Calu3 (cell line): ENCODE measurements at regions of chr19 and their contacts with region 1.

Region 1: DNA sequence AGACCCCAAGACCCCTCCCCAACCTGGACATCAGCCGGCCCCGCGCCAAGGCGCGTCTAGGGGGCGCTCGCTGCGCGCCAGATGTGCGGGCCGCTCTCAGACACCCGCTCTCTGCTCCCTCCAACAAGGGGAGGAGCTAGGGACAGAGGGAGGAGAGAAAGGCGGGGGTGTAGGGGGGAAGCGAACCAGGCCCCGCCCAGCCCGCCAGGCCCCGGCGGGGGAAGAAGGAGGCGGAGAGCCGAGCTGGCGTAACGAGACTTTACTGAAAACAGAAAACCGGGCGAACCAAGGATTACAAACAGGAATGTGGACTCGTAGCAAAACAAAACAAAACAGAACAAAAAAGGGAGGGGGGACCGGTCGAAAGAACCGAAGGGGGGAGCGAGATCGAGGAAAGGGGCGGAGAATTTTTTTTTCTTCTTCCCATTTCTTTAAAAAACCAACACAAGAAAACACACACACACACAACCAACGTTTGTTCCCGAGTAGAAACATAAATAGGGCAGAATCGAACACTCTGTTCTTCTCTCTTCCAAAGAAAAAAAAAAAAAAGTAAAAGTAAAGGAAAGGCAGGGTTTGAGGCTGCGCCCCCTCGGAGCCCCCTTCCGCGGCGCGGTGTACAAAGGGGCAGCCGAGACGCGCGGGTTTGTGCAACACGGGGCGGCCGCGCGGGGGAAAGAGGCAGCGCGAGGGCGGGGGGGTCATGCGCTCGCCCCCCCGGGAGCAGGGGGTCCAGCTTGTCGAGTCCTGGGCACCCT is 1.7 kb downstream of the JUND start:
- DNase-seq: peak; percentile 90
- H3K4me3 Mint-ChIP-seq: peak overlapping the region; percentile 74
- H3K27ac Mint-ChIP-seq: peak overlapping the region; percentile 73
- H3K4me1 Mint-ChIP-seq: peaks cover 17% of the 10 kb centered on the region
- H3K27me3 Mint-ChIP-seq: no peaks in the 10 kb centered on the region
- CTCF ChIP-seq: peak; percentile 86

Region 2: GRCh38 chr19:18218159-18218558 is 61.5 kb before region 1 on chr19:
- CTCF ChIA-PET with region 1: no interaction called
- intact Hi-C with region 1: no loop called
- DNase-seq: no peak
- H3K4me3 Mint-ChIP-seq: no peak overlapping the region
- H3K27ac Mint-ChIP-seq: no peak overlapping the region
- H3K4me1 Mint-ChIP-seq: no peaks in the 10 kb centered on the region
- H3K27me3 Mint-ChIP-seq: peaks cover 24% of the 10 kb centered on the region
- CTCF ChIP-seq: no peak

Region 3: GRCh38 chr19:18259893-18260292 is 19.8 kb before region 1 on chr19:
- CTCF ChIA-PET with region 1: interaction called, 15 read pairs
- intact Hi-C with region 1: no loop called
- DNase-seq: no peak
- H3K4me3 Mint-ChIP-seq: no peak overlapping the region
- H3K27ac Mint-ChIP-seq: no peak overlapping the region
- H3K4me1 Mint-ChIP-seq: peaks cover 7% of the 10 kb centered on the region
- H3K27me3 Mint-ChIP-seq: no peaks in the 10 kb centered on the region
- CTCF ChIP-seq: no peak

Region 4: DNA sequence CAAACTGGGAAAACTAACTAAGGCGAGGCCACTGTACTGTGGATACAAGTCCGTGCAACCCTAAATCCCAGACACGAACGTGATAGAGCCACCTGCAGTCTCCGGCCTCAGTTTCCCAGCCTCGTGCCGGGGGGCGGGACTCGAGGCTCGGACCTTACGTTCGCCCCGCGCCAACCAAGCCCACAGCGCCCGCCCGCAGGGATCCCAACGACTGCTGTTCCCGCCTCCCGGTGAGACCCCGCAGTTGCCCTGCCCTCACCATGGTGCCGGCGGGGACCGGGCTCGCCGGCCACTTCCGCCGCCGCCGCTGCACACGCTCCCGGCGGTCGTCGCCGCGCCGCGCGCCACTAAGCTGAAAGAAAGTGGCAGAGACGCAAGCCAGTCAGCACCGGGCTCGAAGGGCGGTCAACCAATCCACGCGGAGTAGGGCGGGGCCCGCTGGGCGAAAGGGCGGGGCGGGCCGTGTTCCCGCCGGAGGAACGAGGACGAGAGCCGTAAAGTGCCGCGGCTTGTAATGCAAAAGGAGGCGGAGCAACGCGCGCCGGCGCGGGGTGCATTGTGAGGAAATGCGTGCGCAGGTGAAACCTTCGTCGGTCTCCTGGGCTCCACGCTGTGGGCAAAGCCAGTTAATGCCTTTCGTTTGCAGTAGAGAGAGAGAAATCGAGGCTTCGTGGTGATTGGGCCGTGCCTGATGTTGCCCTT is 43.2 kb after region 1 on chr19 and contains the start of gene LSM4:
- CTCF ChIA-PET with region 1: interaction called, 48 read pairs
- intact Hi-C with region 1: loop called (anchors 1 kb)
- DNase-seq: peak; percentile 95
- H3K4me3 Mint-ChIP-seq: peak within 1 kb of the TSS; percentile 72
- H3K27ac Mint-ChIP-seq: peak within 1 kb of the TSS; percentile 91
- H3K4me1 Mint-ChIP-seq: peaks cover 31% of the 10 kb centered on the region
- H3K27me3 Mint-ChIP-seq: no peaks in the 10 kb centered on the region
- CTCF ChIP-seq: no peak
- total RNA-seq, gene LSM4: 111 and 115 TPM in 2 replicates

Region 5: GRCh38 chr19:18328340-18329034 is 48.8 kb after region 1 on chr19:
- CTCF ChIA-PET with region 1: interaction called, 31 read pairs
- intact Hi-C with region 1: loop called (anchors 1 kb)
- DNase-seq: peak; percentile 79
- H3K4me3 Mint-ChIP-seq: peak overlapping the region; percentile 39
- H3K27ac Mint-ChIP-seq: peak overlapping the region; percentile 76
- H3K4me1 Mint-ChIP-seq: peaks cover 6% of the 10 kb centered on the region
- H3K27me3 Mint-ChIP-seq: no peaks in the 10 kb centered on the region
- CTCF ChIP-seq: peak; percentile 45

Region 6: DNA sequence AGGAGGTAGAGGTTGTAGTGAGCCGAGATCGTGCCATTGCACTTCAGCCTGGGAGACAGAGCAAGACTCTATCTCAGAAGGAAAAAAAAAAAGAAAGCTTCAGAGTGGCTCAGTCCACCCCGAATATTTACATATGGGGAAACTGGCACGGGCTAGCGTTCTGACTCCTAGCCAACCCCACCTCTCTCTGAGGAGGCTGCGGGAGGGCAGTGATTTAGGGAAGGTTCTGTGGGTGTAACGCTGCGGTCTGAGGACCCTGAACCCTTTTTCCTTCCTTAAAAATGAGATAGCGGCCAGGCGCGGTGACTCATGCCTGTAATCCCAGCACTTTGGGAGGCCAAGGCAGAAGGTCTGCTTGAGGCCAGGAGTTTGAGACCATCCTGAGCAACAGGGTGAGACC is 112.7 kb after region 1 on chr19:
- CTCF ChIA-PET with region 1: no interaction called
- intact Hi-C with region 1: no loop called
- DNase-seq: no peak
- H3K4me3 Mint-ChIP-seq: no peak overlapping the region
- H3K27ac Mint-ChIP-seq: no peak overlapping the region
- H3K4me1 Mint-ChIP-seq: peaks cover 22% of the 10 kb centered on the region
- H3K27me3 Mint-ChIP-seq: no peaks in the 10 kb centered on the region
- CTCF ChIP-seq: no peak

Region 7: DNA sequence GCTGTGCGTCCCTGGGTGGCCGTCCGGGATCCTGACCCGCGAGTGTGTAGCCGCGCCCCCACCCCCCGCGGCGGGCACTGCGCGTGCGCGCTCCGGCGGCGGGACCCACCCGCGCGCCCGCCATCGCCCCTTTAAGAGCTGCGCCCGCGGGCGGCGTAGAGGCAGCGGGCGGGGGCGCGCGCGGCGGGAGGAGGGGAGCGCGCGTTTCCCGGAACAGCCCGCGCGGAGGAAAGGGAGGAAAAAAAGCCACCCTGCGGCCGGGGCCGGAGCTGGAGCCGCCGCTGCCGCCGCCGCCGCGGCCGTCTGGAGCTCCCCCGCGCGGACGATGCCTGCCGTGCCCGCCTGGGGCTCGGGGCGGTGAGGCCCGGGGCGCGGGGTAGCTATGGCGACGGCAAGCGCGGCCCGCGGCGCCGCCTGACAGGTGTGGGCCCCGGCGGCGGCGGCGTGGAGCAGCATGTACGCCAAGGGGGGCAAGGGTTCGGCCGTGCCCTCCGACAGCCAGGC is 139.6 kb after region 1 on chr19 and contains the start of gene SSBP4:
- CTCF ChIA-PET with region 1: interaction called, 4 read pairs
- intact Hi-C with region 1: loop called (anchors 10 kb)
- DNase-seq: peak; percentile 79
- H3K4me3 Mint-ChIP-seq: peak within 1 kb of the TSS; percentile 83
- H3K27ac Mint-ChIP-seq: peak within 1 kb of the TSS; percentile 51
- H3K4me1 Mint-ChIP-seq: peaks cover 23% of the 10 kb centered on the region
- H3K27me3 Mint-ChIP-seq: no peaks in the 10 kb centered on the region
- CTCF ChIP-seq: no peak
- total RNA-seq, gene SSBP4: 38.8 and 51.5 TPM in 2 replicates